HCT116 (cell line): ENCODE measurements at regions of chr4 and their contacts with region 1.

Region 1: DNA sequence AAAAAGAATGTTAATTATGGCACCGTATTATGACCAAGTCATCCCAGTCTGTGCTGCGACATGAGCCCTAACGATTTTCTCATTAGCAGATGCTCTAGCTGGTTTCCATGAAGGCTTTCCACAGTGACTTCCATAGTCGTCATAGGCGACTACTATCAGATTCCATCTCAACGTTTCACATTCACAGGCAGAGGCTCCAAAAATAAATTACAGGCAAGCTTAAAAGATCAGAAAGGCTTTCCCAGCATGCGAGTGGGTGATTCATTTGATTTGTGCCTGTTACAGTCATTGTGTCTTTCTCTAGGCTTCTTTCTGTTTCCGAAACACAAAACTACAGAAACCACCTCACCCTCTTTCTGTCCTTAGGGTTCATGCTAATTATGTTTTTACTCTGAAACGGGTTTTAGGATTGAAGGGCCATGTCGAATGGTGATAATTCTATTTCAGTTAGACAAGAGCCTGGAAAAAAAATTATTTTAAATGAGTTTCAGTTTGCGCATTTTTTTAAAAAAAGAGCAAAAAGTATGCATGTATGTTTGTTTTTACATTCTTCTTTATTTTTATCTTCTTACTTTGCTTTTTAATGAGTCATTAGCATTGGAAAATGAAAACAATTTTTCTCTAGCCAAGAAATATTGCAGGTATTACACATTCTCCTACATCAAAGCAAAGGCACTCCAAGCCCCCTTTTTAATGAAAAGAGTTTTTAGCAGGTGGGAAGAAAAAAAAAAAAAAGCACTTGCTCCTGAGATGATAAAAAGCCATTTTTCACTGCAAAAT is 43.4 kb downstream of the PALLD start:
- DNase-seq: peak; percentile 89
- ATAC-seq: peak; percentile 33
- H3K4me3 ChIP-seq: peak overlapping the region; percentile 4 to 40; a peak in 2 of 4 replicates
- H3K27ac ChIP-seq: peak overlapping the region; percentile 89
- H3K4me1 ChIP-seq: peaks cover 53 to 99% of the 10 kb centered on the region in 2 experiments
- H3K27me3 ChIP-seq: no peaks in the 10 kb centered on the region
- CTCF ChIP-seq: no peak
- POLR2A ChIP-seq: no peak
- RAD21 ChIP-seq: no peak

Region 2: GRCh38 chr4:168082379-168082778 is 457.9 kb before region 1 on chr4:
- CTCF ChIA-PET with region 1: no interaction called
- POLR2A ChIA-PET with region 1: no interaction called
- RAD21 ChIA-PET with region 1: no interaction called
- intact Hi-C with region 1: loop called (anchors 5 kb)
- DNase-seq: no peak
- ATAC-seq: no peak
- H3K4me3 ChIP-seq: no peak overlapping the region
- H3K27ac ChIP-seq: peak overlapping the region; percentile 81
- H3K4me1 ChIP-seq: peaks cover 6 to 13% of the 10 kb centered on the region in 2 experiments
- H3K27me3 ChIP-seq: no peaks in the 10 kb centered on the region
- CTCF ChIP-seq: no peak
- POLR2A ChIP-seq: no peak
- RAD21 ChIP-seq: no peak

Region 3: DNA sequence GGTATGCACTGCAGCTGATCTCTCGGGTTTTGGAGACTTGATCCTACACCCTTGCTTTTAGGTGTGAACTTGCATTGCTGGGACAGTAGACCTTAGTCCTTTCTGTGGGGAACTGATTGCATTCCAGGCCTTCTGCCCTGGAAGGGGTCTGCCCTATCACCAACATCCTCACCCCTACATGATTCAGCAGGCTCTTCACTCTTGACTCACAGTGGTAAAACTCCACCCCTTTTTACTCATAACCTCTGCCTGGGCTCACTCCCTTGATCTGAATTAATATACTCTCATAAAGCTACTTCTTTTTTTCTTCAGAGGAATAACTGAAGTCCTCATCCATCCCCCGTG is 53.3 kb before region 1 on chr4:
- CTCF ChIA-PET with region 1: no interaction called
- POLR2A ChIA-PET with region 1: interaction called, 5 read pairs
- RAD21 ChIA-PET with region 1: no interaction called
- intact Hi-C with region 1: loop called (anchors 2 kb)
- DNase-seq: no peak
- ATAC-seq: peak; percentile 85
- H3K4me3 ChIP-seq: peak overlapping the region in 1 of 2 experiments; percentile 3; a peak in 2 of 4 replicates
- H3K27ac ChIP-seq: peak overlapping the region; percentile 97
- H3K4me1 ChIP-seq: peaks cover 93 to 99% of the 10 kb centered on the region in 2 experiments
- H3K27me3 ChIP-seq: no peaks in the 10 kb centered on the region
- CTCF ChIP-seq: no peak
- POLR2A ChIP-seq: no peak
- RAD21 ChIP-seq: no peak

Region 4: DNA sequence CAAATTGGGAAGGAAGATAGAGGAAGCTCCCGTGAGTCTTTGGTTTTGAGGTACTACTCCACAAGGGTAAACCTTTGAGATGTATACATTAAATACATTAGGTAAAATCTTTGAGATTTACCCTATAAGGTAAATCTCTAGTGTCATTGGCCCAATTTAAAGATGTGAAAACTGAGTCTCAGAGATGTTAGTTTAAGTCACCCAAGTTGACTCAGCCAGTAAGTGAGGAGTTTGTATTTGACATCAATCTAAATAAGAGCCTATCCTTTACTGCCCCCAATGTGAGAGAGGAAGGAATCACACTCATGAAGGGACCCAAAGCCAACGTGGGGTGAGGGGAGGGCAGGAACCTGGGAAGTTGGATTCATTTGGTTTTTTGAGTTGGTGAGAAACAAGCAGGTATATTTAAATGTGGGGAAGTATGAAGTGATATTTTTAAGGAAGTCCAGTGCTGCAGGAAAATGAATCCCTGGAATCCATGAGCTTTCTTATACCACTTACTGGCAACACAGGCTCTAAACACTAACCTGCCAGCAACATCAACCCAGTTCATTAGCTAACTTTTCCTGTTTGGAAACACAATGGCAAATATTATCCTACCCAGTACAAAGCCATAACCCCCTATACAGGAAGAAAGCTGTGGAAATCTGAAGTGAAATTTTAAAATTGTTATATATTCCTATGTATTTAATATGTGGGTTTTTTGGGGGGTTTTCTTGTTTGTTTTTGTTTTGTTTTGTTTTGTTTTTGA is 11.8 kb after region 1 on chr4:
- CTCF ChIA-PET with region 1: interaction called, 3 read pairs
- POLR2A ChIA-PET with region 1: interaction called, 18 read pairs
- RAD21 ChIA-PET with region 1: no interaction called
- intact Hi-C with region 1: no loop called
- DNase-seq: peak; percentile 59
- ATAC-seq: peak; percentile 59
- H3K4me3 ChIP-seq: no peak overlapping the region
- H3K27ac ChIP-seq: peak overlapping the region; percentile 89; the same call in 1 of the 2 replicates
- H3K4me1 ChIP-seq: peaks cover 62 to 86% of the 10 kb centered on the region in 2 experiments
- H3K27me3 ChIP-seq: no peaks in the 10 kb centered on the region
- CTCF ChIP-seq: peak; percentile 20 to 55 (median 48); a peak in 5 of 6 replicates
- POLR2A ChIP-seq: no peak
- RAD21 ChIP-seq: peak; percentile 76